ENCODE measurements at regions of chr20 and their contacts with region 1.

Region 1: DNA sequence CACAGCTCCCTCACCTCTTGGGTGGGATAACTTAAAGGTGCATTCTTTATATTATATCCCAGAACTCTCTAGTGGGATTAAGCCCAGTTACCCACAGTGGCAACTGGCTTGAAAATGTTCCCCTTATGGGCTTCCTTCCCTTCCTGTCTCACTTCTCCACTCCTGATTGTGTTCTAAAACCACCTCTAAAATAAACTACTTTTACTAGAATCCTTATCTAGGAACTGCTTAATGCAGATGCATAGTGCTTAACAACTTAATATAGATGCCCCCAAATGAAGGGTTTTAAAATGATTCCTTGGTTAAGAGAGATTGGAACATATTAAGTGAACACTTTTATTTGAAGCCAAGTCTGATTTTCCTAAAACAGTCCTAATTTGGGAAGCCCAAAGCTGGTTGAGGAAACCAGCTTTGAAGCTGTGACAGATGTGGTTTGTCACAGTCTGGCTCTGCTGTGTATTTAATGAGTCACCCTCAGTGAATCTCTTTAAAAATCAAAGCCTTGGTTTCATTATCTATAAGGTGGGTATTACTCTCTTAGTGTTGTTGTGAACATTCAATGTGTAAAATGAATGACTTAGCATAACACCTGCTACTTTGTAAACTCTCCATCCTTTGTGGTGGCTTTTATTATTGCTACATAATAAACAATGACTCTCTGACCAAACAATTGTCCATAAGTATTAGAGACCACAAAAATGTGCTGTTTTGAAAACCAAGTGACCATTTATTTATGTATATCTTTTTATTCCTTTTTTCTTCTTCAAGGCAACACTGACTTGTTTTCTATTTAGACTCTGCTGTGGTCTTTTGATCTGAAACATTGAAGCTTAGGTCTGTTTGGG is 24.4 kb downstream of the PLCB1 start:
- DNase-seq: no peak
- H3K4me3 ChIP-seq: no peak overlapping the region
- H3K4me3 Mint-ChIP-seq: peak overlapping the region; percentile 16
- H3K27ac Mint-ChIP-seq: peak overlapping the region; percentile 75
- H3K4me1 ChIP-seq: peaks cover 50% of the 10 kb centered on the region
- H3K4me1 Mint-ChIP-seq: peaks cover 35% of the 10 kb centered on the region
- H3K27me3 ChIP-seq: no peaks in the 10 kb centered on the region
- H3K27me3 Mint-ChIP-seq: no peaks in the 10 kb centered on the region
- CTCF ChIP-seq: no peak

Region 2: GRCh38 chr20:8172191-8172590 is 15.7 kb after region 1 on chr20:
- CTCF ChIA-PET with region 1: no interaction called
- POLR2A ChIA-PET with region 1: no interaction called
- intact Hi-C with region 1: loop called (anchors 1 kb)
- DNase-seq: peak; percentile 65 to 71
- H3K4me3 ChIP-seq: no peak overlapping the region
- H3K4me3 Mint-ChIP-seq: no peak overlapping the region
- H3K27ac Mint-ChIP-seq: peak overlapping the region; percentile 21
- H3K4me1 ChIP-seq: peaks cover 24% of the 10 kb centered on the region
- H3K4me1 Mint-ChIP-seq: peaks cover 9% of the 10 kb centered on the region
- H3K27me3 ChIP-seq: no peaks in the 10 kb centered on the region
- H3K27me3 Mint-ChIP-seq: no peaks in the 10 kb centered on the region
- CTCF ChIP-seq: no peak

Region 3: DNA sequence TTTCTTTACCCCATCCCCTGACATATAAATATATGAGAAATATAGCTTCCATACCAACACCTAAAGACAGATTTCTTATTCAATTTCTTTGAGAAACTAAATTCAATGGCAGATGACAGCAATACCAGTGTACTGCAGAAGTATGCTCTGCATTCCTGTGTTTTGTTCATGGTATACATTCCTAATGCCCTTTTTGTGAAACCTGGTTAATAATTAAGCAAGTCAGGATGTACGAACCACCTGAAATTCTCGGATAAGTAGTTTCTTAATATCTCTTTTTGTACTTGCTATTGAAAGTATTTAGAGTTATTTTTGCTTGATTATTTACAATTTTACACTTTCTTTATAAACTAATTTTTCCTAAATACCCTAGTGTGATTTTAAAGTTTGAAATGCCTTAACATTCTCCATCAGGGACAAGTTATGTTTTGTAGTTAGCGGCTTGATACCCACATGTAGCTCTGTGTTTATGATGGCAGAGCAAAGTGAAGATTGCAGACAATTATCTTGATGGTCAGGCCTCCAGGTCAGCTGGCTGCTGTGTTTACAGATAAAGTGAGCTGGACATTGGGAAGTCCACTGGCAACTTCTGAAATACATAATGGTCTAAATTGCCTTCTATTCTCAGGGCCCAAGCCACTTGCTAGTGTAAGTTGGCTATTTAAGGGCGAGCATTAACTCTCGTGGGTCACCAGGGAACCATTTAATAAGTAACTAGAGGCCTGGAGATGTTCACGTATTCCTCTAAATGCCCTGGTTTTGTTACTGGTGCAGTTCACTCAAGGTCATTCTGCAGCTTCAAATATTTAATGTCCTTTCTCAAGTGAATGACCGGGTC is 33.8 kb after region 1 on chr20:
- CTCF ChIA-PET with region 1: no interaction called
- POLR2A ChIA-PET with region 1: no interaction called
- intact Hi-C with region 1: loop called (anchors 2 kb)
- DNase-seq: peak; percentile 42 to 58
- H3K4me3 ChIP-seq: no peak overlapping the region
- H3K4me3 Mint-ChIP-seq: peak overlapping the region; percentile 39
- H3K27ac Mint-ChIP-seq: no peak overlapping the region
- H3K4me1 ChIP-seq: peaks cover 45% of the 10 kb centered on the region
- H3K4me1 Mint-ChIP-seq: peaks cover 28% of the 10 kb centered on the region
- H3K27me3 ChIP-seq: no peaks in the 10 kb centered on the region
- H3K27me3 Mint-ChIP-seq: no peaks in the 10 kb centered on the region
- CTCF ChIP-seq: no peak

Region 4: DNA sequence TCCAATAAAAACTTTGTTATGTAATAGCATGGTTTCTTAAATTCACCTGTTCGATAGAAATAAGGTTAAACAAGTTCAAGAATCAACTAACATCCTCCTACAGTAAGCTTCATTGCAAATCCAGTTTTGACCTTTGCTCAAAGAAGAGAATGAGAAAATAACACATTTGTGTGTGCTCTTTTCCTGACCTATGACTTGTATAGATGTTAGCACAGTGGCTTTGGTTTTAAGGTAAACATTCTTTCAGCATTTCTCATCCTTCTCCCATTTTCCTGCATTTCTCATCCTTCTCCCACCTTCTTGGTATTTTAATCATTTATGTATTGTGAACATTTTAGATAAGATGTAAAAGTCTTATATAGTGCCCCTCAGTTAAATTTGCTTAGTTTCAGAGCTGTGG is 49.5 kb after region 1 on chr20:
- CTCF ChIA-PET with region 1: no interaction called
- POLR2A ChIA-PET with region 1: no interaction called
- intact Hi-C with region 1: loop called (anchors 1 kb)
- DNase-seq: peak in 1 of 2 experiments; percentile 33
- H3K4me3 ChIP-seq: no peak overlapping the region
- H3K4me3 Mint-ChIP-seq: peak overlapping the region; percentile 54
- H3K27ac Mint-ChIP-seq: peak overlapping the region; percentile 43
- H3K4me1 ChIP-seq: peaks cover 59% of the 10 kb centered on the region
- H3K4me1 Mint-ChIP-seq: peaks cover 49% of the 10 kb centered on the region
- H3K27me3 ChIP-seq: no peaks in the 10 kb centered on the region
- H3K27me3 Mint-ChIP-seq: no peaks in the 10 kb centered on the region
- CTCF ChIP-seq: no peak

Region 5: DNA sequence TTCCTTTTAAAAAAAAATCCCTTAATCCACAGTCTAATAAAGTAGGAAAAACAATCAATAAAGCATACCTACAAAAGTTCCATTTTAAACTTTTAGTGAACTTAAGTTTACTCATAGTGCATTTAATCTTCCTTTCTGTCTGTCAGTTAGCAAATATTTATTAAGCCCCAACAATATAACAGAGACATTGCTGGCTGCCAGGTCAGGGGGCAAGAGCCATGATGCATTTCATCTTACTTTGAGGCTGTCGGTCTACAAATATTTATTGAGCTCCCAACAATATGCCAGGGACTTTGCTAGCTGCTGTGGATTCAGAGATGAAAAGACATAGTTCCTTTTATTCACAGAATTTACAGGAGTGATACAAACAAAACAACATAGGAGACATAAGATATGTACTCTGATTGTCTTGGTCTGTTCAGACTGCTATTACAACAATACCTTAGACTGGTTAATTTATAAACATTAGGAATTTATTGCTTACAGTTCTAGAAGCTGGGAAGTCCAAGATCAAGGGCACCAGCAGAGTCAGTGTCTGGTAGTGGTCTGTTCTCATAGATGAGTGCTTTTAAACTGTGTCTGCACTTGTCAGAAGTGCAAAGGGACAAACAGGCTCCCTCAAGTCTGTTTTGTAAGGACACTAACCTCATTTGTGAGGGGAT is 94.2 kb after region 1 on chr20:
- CTCF ChIA-PET with region 1: no interaction called
- POLR2A ChIA-PET with region 1: no interaction called
- intact Hi-C with region 1: loop called (anchors 1 kb)
- DNase-seq: peak; percentile 73 to 78
- H3K4me3 ChIP-seq: no peak overlapping the region
- H3K4me3 Mint-ChIP-seq: peak overlapping the region; percentile 25
- H3K27ac Mint-ChIP-seq: peak overlapping the region; percentile 31
- H3K4me1 ChIP-seq: peaks cover 31% of the 10 kb centered on the region
- H3K4me1 Mint-ChIP-seq: peaks cover 39% of the 10 kb centered on the region
- H3K27me3 ChIP-seq: no peaks in the 10 kb centered on the region
- H3K27me3 Mint-ChIP-seq: no peaks in the 10 kb centered on the region
- CTCF ChIP-seq: no peak

Region 6: GRCh38 chr20:8344106-8344505 is 187.6 kb after region 1 on chr20:
- CTCF ChIA-PET with region 1: no interaction called
- POLR2A ChIA-PET with region 1: no interaction called
- intact Hi-C with region 1: no loop called
- DNase-seq: no peak
- H3K4me3 ChIP-seq: no peak overlapping the region
- H3K4me3 Mint-ChIP-seq: no peak overlapping the region
- H3K27ac Mint-ChIP-seq: no peak overlapping the region
- H3K4me1 ChIP-seq: no peaks in the 10 kb centered on the region
- H3K4me1 Mint-ChIP-seq: peaks cover 2% of the 10 kb centered on the region
- H3K27me3 ChIP-seq: no peaks in the 10 kb centered on the region
- H3K27me3 Mint-ChIP-seq: no peaks in the 10 kb centered on the region
- CTCF ChIP-seq: no peak